ENCODE measurements at regions of chr2 and their contacts with region 1.

Region 1: GRCh38 chr2:240143801-240144648 is 3.6 kb upstream of the OTOS start:
- DNase-seq: peak in 1 of 2 donors; percentile 80
- H3K4me3 ChIP-seq: no peak overlapping the region
- H3K27ac ChIP-seq: no peak overlapping the region
- H3K4me1 ChIP-seq: no peaks in the 10 kb centered on the region
- H3K27me3 ChIP-seq: no peaks in the 10 kb centered on the region
- CTCF ChIP-seq: peak; percentile 89 to 93 (median 92)

Region 2: GRCh38 chr2:240060977-240061591 is 82.9 kb before region 1 on chr2:
- intact Hi-C with region 1: loop called (anchors 1 kb)
- DNase-seq: no peak
- H3K4me3 ChIP-seq: no peak overlapping the region
- H3K27ac ChIP-seq: no peak overlapping the region
- H3K4me1 ChIP-seq: no peaks in the 10 kb centered on the region
- H3K27me3 ChIP-seq: no peaks in the 10 kb centered on the region
- CTCF ChIP-seq: peak; percentile 26 to 61 (median 42)

Region 3: GRCh38 chr2:240189686-240190085 is 45.7 kb after region 1 on chr2:
- intact Hi-C with region 1: no loop called
- DNase-seq: peak in 1 of 2 donors; percentile 46
- H3K4me3 ChIP-seq: no peak overlapping the region
- H3K27ac ChIP-seq: no peak overlapping the region
- H3K4me1 ChIP-seq: no peaks in the 10 kb centered on the region
- H3K27me3 ChIP-seq: no peaks in the 10 kb centered on the region
- CTCF ChIP-seq: no peak